Activated CD4-positive, alpha-beta memory T cell treated with anti-CD3 and anti-CD28 coated beads for 36 hours (primary cell): ENCODE measurements at regions of chr11 and their contacts with region 1.

Region 1: GRCh38 chr11:108222686-108223448 is at the start of gene ATM:
- DNase-seq: peak; percentile 99
- H3K4me3 Mint-ChIP-seq: no peak within 1 kb of the TSS
- H3K27ac Mint-ChIP-seq: no peak within 1 kb of the TSS
- H3K4me1 Mint-ChIP-seq: peaks cover 49% of the 10 kb centered on the region
- H3K27me3 Mint-ChIP-seq: no peaks in the 10 kb centered on the region
- total RNA-seq, gene ATM: 31.3 to 31.6 TPM

Region 2: DNA sequence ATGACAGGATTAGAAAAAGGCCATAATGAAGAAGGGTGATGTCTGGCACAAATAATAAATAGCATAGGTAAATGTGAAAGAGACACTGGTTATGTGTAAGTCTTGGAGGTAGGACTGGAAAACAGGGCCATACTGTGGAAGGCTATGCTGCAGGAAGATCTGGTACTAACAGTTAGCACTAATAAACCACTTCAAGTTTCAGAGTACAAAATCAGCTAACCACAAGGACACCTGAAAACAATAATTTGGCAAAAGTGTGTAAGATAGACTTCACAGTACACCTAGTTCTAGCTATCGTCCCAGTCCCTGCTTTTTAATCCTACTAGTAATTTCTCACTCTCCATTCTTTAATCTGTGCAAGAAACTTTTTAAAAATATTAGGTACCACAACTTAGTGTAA is 809.5 kb before region 1 on chr11:
- CTCF ChIA-PET with region 1: no interaction called
- POLR2A ChIA-PET with region 1: no interaction called
- intact Hi-C with region 1: no loop called
- DNase-seq: no peak
- H3K4me3 Mint-ChIP-seq: no peak overlapping the region
- H3K27ac Mint-ChIP-seq: no peak overlapping the region
- H3K4me1 Mint-ChIP-seq: peaks cover 6% of the 10 kb centered on the region
- H3K27me3 Mint-ChIP-seq: no peaks in the 10 kb centered on the region

Region 3: GRCh38 chr11:107545101-107545514 is 677.8 kb before region 1 on chr11:
- CTCF ChIA-PET with region 1: no interaction called
- POLR2A ChIA-PET with region 1: no interaction called
- intact Hi-C with region 1: no loop called
- DNase-seq: no peak
- H3K4me3 Mint-ChIP-seq: no peak overlapping the region
- H3K27ac Mint-ChIP-seq: no peak overlapping the region
- H3K4me1 Mint-ChIP-seq: peaks cover 10% of the 10 kb centered on the region
- H3K27me3 Mint-ChIP-seq: no peaks in the 10 kb centered on the region

Region 4: DNA sequence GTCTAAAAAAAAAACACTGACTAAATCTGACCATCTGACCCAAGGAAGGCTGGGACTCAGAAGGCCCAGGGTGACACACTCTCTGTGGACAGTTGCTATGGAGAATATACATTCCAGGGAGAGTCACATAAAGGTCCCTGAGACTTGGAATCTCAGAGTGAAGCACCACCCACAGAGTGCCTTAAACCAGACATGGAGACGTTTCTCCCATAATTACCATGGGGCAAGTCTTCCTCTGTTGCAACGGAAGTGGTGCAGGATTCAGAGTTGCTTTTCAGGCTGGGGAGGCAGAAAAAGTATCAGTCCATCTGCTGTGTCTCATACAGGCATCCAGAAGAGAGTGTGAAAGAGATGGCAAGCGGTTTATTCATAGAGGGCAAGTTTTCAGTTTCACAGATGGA is 452.3 kb before region 1 on chr11:
- CTCF ChIA-PET with region 1: no interaction called
- POLR2A ChIA-PET with region 1: no interaction called
- intact Hi-C with region 1: loop called (anchors 5 kb)
- DNase-seq: peak; percentile 24
- H3K4me3 Mint-ChIP-seq: no peak overlapping the region
- H3K27ac Mint-ChIP-seq: peak overlapping the region; percentile 35
- H3K4me1 Mint-ChIP-seq: peaks cover 25% of the 10 kb centered on the region
- H3K27me3 Mint-ChIP-seq: peaks cover 13% of the 10 kb centered on the region

Region 5: DNA sequence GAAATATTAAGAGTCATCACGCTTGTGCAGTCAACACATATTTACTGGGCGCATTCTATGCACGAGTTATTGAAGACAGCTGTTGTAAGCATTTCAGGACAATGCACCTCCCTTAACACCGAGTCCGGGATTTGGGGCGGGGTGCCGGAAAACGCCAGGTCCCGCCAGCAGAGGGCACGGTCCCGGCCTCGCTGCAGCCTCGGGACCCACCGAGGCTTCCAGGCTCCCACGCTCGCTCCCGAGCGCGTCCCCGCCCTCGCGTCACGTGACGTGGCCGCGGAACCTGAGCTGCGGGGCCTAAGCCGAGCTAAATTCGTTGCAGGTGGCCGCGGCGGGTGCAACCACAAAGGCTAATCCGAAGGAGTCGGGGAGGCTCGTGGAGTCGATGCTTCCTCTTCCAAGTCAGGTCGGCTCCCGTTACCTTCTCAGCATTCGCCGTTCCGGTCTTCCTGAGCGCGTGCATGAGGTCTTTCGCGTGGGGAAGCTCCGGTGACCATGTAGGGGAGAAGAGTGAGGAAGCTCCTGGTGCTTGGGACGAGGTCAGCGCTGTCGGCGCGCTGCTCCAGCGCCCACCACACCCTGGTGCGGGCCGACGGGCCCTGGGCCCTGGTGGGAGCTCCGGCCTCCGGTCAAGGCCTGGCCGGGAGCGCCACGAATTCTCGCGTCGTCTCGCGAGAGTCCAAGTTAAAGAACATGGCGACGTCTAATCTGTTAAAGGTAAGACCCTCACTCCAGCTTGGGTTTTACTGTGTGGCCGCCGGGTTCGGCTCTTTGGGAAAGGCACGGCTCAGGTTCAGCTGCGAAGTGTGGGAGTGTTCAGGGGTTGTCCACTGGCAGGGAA is 214.0 kb before region 1 on chr11 and contains the start of gene CUL5:
- CTCF ChIA-PET with region 1: interaction called, 5 read pairs
- POLR2A ChIA-PET with region 1: interaction called, 4 read pairs
- intact Hi-C with region 1: loop called (anchors 2 kb)
- DNase-seq: peak; percentile 94
- H3K4me3 Mint-ChIP-seq: peak within 1 kb of the TSS; percentile 93
- H3K27ac Mint-ChIP-seq: peak within 1 kb of the TSS; percentile 93
- H3K4me1 Mint-ChIP-seq: peaks cover 17% of the 10 kb centered on the region
- H3K27me3 Mint-ChIP-seq: no peaks in the 10 kb centered on the region
- total RNA-seq, gene CUL5: 27.7 to 30.7 TPM

Region 6: GRCh38 chr11:108199446-108200321 is 23.2 kb before region 1 on chr11:
- CTCF ChIA-PET with region 1: interaction called, 7 read pairs
- POLR2A ChIA-PET with region 1: interaction called, 30 read pairs
- intact Hi-C with region 1: loop called (anchors 1 kb)
- DNase-seq: peak; percentile 91
- H3K4me3 Mint-ChIP-seq: no peak overlapping the region
- H3K27ac Mint-ChIP-seq: peak overlapping the region; percentile 76
- H3K4me1 Mint-ChIP-seq: peaks cover 89% of the 10 kb centered on the region
- H3K27me3 Mint-ChIP-seq: no peaks in the 10 kb centered on the region

Region 7: DNA sequence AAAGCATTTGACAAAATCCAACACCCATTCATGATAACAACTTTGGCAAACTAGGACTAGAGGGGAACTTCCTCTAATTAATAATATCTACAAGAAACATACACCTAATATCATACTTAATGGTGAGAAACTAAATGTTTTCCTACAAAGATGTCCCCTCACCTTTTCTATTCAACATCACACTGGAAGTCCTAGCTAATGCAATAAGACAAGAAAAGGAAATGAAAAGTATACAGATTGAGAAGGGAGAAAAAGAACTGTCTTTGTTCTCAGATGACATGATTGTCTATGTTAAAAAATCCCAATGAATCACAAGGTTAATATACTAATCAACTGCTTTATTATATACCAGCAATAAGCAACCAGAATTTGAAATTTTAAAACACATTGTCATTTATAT is 192.1 kb after region 1 on chr11:
- CTCF ChIA-PET with region 1: no interaction called
- POLR2A ChIA-PET with region 1: no interaction called
- intact Hi-C with region 1: no loop called
- DNase-seq: no peak
- H3K4me3 Mint-ChIP-seq: no peak overlapping the region
- H3K27ac Mint-ChIP-seq: no peak overlapping the region
- H3K4me1 Mint-ChIP-seq: no peaks in the 10 kb centered on the region
- H3K27me3 Mint-ChIP-seq: no peaks in the 10 kb centered on the region

Region 8: DNA sequence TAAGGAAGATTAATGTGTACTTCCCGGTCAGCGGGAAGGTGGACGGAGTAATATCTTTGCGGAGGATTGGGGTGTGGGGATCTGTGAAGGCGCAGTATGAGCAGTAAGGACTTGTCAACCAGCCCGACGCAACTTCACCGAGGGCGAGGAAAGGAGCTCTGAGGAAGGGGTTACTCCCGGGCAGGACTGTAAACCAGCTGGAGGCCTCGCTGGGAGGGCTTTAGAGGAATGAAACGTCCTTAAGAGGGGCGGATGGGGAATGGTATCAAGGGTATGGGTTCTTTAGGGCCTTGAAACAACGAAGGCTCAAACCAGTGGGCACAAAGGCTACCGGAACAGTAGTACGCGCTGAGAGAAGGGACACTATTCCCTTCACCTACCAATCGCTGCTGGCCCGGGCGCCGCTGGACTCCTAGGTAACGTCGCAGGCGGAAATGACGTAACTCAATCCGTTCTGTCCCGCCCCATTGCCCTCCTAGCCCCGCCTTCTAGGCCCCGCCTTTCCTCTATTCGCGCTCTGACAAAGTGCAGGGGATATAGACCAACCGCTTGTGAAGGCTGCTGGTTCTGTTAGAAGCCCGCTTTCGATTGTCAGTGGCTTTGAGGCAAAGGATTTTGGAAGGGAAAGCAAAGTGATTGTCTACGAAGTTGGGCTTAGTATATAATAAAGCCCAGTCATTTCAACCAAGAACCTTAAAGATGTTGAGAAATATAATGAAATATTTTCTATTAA is 244.4 kb after region 1 on chr11 and contains the start of gene C11orf65:
- CTCF ChIA-PET with region 1: no interaction called
- POLR2A ChIA-PET with region 1: no interaction called
- intact Hi-C with region 1: loop called (anchors 1 kb)
- DNase-seq: peak; percentile 97
- H3K4me3 Mint-ChIP-seq: peak within 1 kb of the TSS; percentile 99
- H3K27ac Mint-ChIP-seq: peak within 1 kb of the TSS; percentile 99
- H3K4me1 Mint-ChIP-seq: peaks cover 3% of the 10 kb centered on the region
- H3K27me3 Mint-ChIP-seq: no peaks in the 10 kb centered on the region
- total RNA-seq, gene C11orf65: 1.0 to 2.0 TPM

Region 9: GRCh38 chr11:108647701-108648527 is 425.0 kb after region 1 on chr11:
- CTCF ChIA-PET with region 1: no interaction called
- POLR2A ChIA-PET with region 1: no interaction called
- intact Hi-C with region 1: loop called (anchors 1 kb)
- DNase-seq: peak; percentile 76
- H3K4me3 Mint-ChIP-seq: no peak overlapping the region
- H3K27ac Mint-ChIP-seq: no peak overlapping the region
- H3K4me1 Mint-ChIP-seq: no peaks in the 10 kb centered on the region
- H3K27me3 Mint-ChIP-seq: no peaks in the 10 kb centered on the region